Heart left ventricle (tissue), 16 donors: ENCODE measurements at regions of chr11 and their contacts with region 1.

Region 1: DNA sequence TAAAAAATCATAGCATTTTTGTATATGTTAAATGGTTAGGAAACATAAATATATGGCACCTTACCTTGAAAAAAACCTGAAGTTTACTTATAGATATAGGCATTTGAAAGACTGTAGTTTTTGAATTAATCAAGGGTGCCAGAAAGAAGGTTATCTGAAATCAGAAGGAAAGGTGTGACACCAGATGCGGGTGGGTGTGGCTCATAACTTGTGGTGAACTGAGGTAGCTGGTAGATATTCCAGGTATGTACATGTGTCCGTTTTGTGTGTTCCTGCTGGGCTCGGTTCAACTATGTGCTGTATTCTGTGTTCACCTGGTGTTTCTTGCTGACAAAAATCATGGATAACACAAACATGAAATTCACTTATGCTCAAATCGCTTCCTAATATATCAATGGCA is 35.6 kb downstream of the STK33 start:
- DNase-seq: no peak
- ATAC-seq: no peak
- H3K4me3 ChIP-seq: no peak overlapping the region
- H3K27ac ChIP-seq: no peak overlapping the region
- H3K4me1 ChIP-seq: no peaks in the 10 kb centered on the region
- H3K27me3 ChIP-seq: no peaks in the 10 kb centered on the region
- CTCF ChIP-seq: no peak
- POLR2A ChIP-seq: no peak

Region 2: GRCh38 chr11:8354622-8355415 is 203.6 kb before region 1 on chr11:
- intact Hi-C with region 1: loop called in 1 of 10 experiments (anchors 10 kb)
- DNase-seq: peak in 1 of 5 donors; percentile 47
- ATAC-seq: no peak
- H3K4me3 ChIP-seq: no peak overlapping the region
- H3K27ac ChIP-seq: no peak overlapping the region
- H3K4me1 ChIP-seq: peaks cover 0 to 5% (median 0%) of the 10 kb centered on the region in 12 donors
- H3K27me3 ChIP-seq: peaks cover 0 to 8% (median 0%) of the 10 kb centered on the region in 9 donors
- CTCF ChIP-seq: peak in 1 of 12 donors; percentile 15
- POLR2A ChIP-seq: no peak

Region 3: GRCh38 chr11:8717876-8718753 is 159.7 kb after region 1 on chr11:
- intact Hi-C with region 1: no loop called
- DNase-seq: peak in 4 of 5 donors; percentile 36 to 82 (median 59)
- ATAC-seq: peak; percentile 77 to 82 (median 80)
- H3K4me3 ChIP-seq: no peak overlapping the region
- H3K27ac ChIP-seq: peak overlapping the region; percentile 50 to 95 (median 80)
- H3K4me1 ChIP-seq: peaks cover 24 to 97% (median 82%) of the 10 kb centered on the region in 12 donors
- H3K27me3 ChIP-seq: no peaks in the 10 kb centered on the region
- CTCF ChIP-seq: no peak
- POLR2A ChIP-seq: no peak